Mammary epithelial cell (primary cell): ENCODE measurements at regions of chr22 and their contacts with region 1.

Region 1: GRCh38 chr22:26903030-26903856 is 245.9 kb downstream of the MIAT start:
- DNase-seq: no peak
- H3K4me3 ChIP-seq: no peak overlapping the region
- H3K27ac ChIP-seq: no peak overlapping the region
- H3K4me1 ChIP-seq: no peaks in the 10 kb centered on the region
- H3K27me3 ChIP-seq: peaks cover 15% of the 10 kb centered on the region
- CTCF ChIP-seq: no peak

Region 2: DNA sequence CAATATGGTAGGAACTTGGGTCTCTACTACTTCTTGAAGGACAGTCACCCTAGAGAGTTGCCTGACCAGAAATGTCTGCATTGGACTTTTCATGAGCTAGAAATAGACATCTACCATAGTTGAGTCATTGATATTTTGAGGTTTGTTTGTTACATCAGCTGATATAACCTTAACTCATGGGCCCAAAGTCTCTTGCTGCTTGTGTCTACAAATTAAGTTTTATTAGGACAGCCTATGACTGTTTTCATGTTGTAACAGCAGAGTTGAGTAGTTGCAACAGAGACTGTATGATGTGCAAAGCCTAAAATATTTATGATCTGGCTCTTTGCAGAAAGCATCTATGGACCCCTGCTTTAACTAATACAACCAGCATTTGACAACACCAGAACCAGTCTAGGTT is 90.5 kb before region 1 on chr22:
- CTCF ChIA-PET with region 1: no interaction called
- dilution Hi-C with region 1: loop called (anchors 5 kb)
- in situ Hi-C with region 1: no loop called
- intact Hi-C with region 1: no loop called
- DNase-seq: peak; percentile 2
- H3K4me3 ChIP-seq: no peak overlapping the region
- H3K27ac ChIP-seq: no peak overlapping the region
- H3K4me1 ChIP-seq: no peaks in the 10 kb centered on the region
- H3K27me3 ChIP-seq: no peaks in the 10 kb centered on the region
- CTCF ChIP-seq: no peak

Region 3: DNA sequence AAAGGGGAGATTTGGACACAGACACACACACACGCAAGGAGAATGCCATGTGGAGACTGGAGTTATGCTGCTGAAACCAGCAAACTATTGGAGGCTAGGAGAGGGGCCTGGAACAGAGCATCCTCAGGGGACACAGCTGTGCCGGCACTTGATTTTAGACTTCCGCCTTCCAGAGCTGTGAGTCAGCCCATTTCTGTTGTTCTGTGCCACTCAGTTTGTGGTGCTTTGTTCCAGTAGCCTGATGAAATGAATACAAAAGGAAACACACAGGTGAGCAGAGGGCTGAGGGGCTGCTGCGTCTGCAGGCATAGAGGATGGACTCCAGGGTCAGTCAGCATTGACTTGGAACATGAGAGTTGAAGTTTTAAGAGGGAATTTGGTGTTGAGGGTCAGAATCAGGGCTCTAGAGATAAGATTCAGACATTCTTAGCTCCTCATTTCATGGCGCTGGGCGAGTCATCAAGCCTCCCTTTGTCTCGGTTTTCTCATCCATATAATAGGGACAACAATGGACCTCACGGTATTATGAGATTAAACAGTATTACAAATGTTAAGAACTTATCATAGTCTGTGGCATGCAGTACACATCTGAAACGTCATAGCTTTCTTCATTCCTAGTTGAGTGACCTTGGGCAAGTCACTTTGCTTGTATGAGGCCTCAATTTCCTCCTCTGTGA is 54.9 kb before region 1 on chr22:
- CTCF ChIA-PET with region 1: no interaction called
- dilution Hi-C with region 1: no loop called
- in situ Hi-C with region 1: no loop called
- intact Hi-C with region 1: no loop called
- DNase-seq: no peak
- H3K4me3 ChIP-seq: no peak overlapping the region
- H3K27ac ChIP-seq: no peak overlapping the region
- H3K4me1 ChIP-seq: no peaks in the 10 kb centered on the region
- H3K27me3 ChIP-seq: no peaks in the 10 kb centered on the region
- CTCF ChIP-seq: no peak

Region 4: DNA sequence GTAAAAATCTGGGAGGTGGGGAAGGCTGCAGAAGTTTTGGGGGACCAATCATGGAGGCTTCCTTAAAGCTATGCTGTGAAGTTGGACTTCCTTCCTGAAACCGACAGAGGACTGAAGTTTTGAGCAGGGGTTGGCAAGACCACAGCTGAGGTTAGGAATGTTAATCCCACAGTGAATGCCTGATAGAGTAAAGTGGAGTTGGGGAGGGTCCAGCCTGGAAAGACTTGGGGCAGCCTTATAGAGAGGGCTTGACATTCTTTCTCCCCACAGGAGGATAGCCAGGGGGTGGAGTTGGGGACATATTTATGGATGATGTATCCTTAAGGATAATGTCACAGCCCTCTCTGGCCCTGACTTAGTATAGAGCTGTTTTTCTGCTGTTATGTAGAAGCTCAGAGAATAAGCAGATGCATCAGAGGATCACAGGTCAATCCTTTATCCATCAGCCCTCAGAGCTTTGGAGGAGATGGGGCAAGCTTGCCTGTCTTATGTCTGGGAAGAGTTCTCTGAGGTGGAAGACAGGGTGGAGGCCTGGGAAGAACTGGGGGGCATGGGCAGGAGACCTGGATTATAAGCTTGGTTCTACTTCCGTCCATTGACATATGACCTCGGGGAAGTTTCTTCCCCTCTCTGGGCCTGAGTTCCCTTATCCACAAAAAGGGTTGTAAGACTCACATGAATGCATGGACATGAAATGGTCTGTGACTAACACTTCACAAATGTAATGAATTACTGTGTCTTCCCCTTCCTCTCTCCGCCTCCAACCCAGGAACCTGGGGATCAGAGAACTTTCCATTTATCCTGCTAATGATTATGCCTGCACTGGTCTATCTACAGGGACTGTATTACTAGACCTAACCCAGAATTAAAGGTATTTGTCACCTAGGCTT is 71.9 kb after region 1 on chr22:
- CTCF ChIA-PET with region 1: no interaction called
- dilution Hi-C with region 1: loop called (anchors 5 kb)
- in situ Hi-C with region 1: no loop called
- intact Hi-C with region 1: no loop called
- DNase-seq: no peak
- H3K4me3 ChIP-seq: no peak overlapping the region
- H3K27ac ChIP-seq: no peak overlapping the region
- H3K4me1 ChIP-seq: no peaks in the 10 kb centered on the region
- H3K27me3 ChIP-seq: no peaks in the 10 kb centered on the region
- CTCF ChIP-seq: no peak